ENCODE measurements at regions of chr3 and their contacts with region 1.

Region 1: GRCh38 chr3:196502775-196503195 is 783 bp downstream of the RNF168 start:
- DNase-seq: peak; percentile 65
- H3K4me3 ChIP-seq: peak overlapping the region; percentile 87
- H3K27ac ChIP-seq: peak overlapping the region; percentile 98
- H3K4me1 ChIP-seq: peaks cover 7% of the 10 kb centered on the region
- H3K27me3 ChIP-seq: no peaks in the 10 kb centered on the region
- CTCF ChIP-seq: no peak

Region 2: GRCh38 chr3:196431181-196432136 is 71.3 kb before region 1 on chr3:
- intact Hi-C with region 1: loop called (anchors 2 kb)
- DNase-seq: peak; percentile 31
- H3K4me3 ChIP-seq: peak overlapping the region; percentile 99
- H3K27ac ChIP-seq: peak overlapping the region; percentile 87
- H3K4me1 ChIP-seq: no peaks in the 10 kb centered on the region
- H3K27me3 ChIP-seq: no peaks in the 10 kb centered on the region
- CTCF ChIP-seq: no peak

Region 3: DNA sequence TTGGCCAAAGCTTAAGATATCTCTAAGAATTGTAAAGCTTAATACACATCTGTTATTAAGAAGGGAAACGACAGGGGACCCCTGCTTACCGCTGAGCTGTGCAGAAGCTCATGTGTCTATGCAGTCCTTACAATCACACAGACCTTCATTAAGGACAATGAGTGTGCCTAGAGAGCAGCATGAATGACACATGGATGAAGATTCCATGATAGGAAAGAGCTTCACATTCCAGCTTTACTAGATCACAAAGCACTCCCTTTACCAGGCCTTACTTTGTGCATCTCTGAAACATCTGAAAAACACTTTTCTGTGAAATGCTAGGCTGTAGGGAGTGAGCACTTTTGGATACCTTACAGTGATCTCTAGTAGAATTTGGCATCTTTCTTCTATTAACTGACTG is 31.2 kb before region 1 on chr3:
- intact Hi-C with region 1: no loop called
- DNase-seq: no peak
- H3K4me3 ChIP-seq: no peak overlapping the region
- H3K27ac ChIP-seq: no peak overlapping the region
- H3K4me1 ChIP-seq: no peaks in the 10 kb centered on the region
- H3K27me3 ChIP-seq: no peaks in the 10 kb centered on the region
- CTCF ChIP-seq: no peak